Heart left ventricle (tissue), 16 donors: ENCODE measurements at regions of chr12 and their contacts with region 1.

Region 1: GRCh38 chr12:8078398-8078797 is 3.7 kb upstream of the NECAP1 start:
- DNase-seq: peak in 1 of 5 donors; percentile 20
- ATAC-seq: no peak
- H3K4me3 ChIP-seq: no peak overlapping the region
- H3K27ac ChIP-seq: no peak overlapping the region
- H3K4me1 ChIP-seq: peaks cover 0 to 27% (median 11%) of the 10 kb centered on the region in 12 donors
- H3K27me3 ChIP-seq: peaks cover 0 to 5% (median 0%) of the 10 kb centered on the region in 9 donors
- CTCF ChIP-seq: peak in 7 of 12 donors; percentile 12 to 41 (median 16)
- POLR2A ChIP-seq: no peak

Region 2: DNA sequence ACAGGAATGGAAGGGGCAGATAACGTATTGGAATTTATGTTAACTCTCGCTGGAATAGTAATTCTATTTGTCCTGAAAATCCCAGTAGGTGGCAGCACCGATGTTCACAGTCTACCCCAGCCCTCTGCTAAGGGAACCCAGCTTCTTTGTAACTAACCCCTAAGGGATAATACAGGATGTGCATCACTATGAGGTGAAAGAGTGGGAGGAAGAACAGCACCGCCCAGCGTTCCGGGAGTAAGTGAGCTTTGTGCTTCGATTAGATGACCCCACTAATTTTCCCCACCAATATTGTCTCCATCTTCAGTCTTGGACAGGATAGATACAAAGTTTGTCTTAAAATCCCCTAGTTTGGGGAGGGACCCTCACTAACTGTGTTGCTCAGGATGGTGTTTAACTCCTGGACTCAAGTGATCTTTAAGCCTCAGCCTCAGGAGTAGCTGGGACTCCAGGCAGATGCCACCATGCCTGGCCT is 145.1 kb before region 1 on chr12:
- intact Hi-C with region 1: loop called in 1 of 10 experiments (anchors 10 kb)
- DNase-seq: peak; percentile 68 to 86 (median 83)
- ATAC-seq: peak; percentile 87 to 95 (median 91)
- H3K4me3 ChIP-seq: peak overlapping the region; percentile 6 to 74 (median 64)
- H3K27ac ChIP-seq: peak overlapping the region; percentile 64 to 96 (median 88)
- H3K4me1 ChIP-seq: peaks cover 0 to 38% (median 7%) of the 10 kb centered on the region in 12 donors
- H3K27me3 ChIP-seq: peaks cover 0 to 4% (median 0%) of the 10 kb centered on the region in 9 donors
- CTCF ChIP-seq: peak; percentile 47 to 87 (median 72)
- POLR2A ChIP-seq: peak in 1 of 2 donors; percentile 49

Region 3: GRCh38 chr12:8032242-8033152 is 45.9 kb before region 1 on chr12 and contains the start of gene FOXJ2:
- intact Hi-C with region 1: loop called in 8 of 10 experiments (anchors 2 to 10 kb)
- DNase-seq: peak; percentile 84 to 92 (median 89)
- ATAC-seq: peak; percentile 28 to 94 (median 84)
- H3K4me3 ChIP-seq: peak within 1 kb of the TSS; percentile 76 to 98 (median 96)
- H3K27ac ChIP-seq: peak within 1 kb of the TSS; percentile 94 to 99 (median 98)
- H3K4me1 ChIP-seq: peaks cover 8 to 55% (median 42%) of the 10 kb centered on the region in 12 donors
- H3K27me3 ChIP-seq: no peaks in the 10 kb centered on the region
- CTCF ChIP-seq: peak in 2 of 12 donors; percentile 13 to 28
- POLR2A ChIP-seq: peak in 1 of 2 donors; percentile 64
- total RNA-seq, gene FOXJ2: 22.7 to 34.7 (median 24.9) TPM

Region 4: DNA sequence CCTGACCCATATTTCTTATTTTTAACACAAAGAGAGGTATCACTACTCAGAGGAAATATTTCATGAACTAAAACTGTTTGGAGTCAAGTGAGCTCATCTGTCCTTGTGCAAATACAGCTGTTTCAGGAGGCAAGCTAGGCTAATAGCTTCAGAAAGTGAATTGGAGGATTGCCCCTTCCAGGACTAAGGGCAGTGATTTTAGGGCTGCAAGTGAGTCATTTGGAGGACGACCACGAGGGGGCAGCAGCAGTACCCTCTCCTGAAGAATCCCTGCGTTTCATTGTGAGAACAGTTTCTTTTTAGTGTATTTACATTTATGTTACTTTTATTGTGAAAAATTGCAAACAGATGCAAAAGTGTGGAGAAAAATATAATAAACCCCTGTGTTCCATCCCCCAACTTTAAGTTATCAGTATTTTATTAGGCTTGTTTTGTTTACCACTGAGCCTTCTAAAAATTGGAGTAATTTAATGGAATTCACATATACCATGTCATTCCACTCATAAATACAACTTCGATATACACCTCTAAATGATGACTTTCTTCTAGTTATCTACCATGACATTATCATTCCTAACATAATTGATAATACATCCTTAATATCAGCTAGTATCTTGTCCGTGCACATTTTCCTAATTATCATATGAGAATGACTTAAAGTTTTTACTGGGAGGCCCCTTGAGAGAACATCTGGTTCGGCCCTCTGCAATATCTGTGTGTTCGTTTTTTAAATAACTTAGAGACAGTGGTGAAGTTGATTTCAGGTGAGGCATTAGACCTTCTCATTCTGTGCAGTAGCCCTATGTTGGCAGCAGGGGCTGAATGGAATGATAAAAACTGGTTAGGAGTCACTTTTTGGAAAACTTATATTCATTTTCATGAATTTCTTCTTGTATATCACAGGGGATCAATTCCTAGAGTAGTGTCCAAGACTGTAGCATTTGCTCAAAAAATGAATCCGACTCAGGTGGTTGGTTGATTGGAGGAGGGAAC is 32.1 kb before region 1 on chr12:
- intact Hi-C with region 1: loop called in 2 of 10 experiments (anchors 5 kb)
- DNase-seq: peak; percentile 60 to 84 (median 73)
- ATAC-seq: peak; percentile 54 to 73 (median 62)
- H3K4me3 ChIP-seq: no peak overlapping the region
- H3K27ac ChIP-seq: no peak overlapping the region
- H3K4me1 ChIP-seq: peaks cover 0 to 11% (median 0%) of the 10 kb centered on the region in 12 donors
- H3K27me3 ChIP-seq: no peaks in the 10 kb centered on the region
- CTCF ChIP-seq: peak; percentile 73 to 95 (median 86)
- POLR2A ChIP-seq: no peak

Region 5: DNA sequence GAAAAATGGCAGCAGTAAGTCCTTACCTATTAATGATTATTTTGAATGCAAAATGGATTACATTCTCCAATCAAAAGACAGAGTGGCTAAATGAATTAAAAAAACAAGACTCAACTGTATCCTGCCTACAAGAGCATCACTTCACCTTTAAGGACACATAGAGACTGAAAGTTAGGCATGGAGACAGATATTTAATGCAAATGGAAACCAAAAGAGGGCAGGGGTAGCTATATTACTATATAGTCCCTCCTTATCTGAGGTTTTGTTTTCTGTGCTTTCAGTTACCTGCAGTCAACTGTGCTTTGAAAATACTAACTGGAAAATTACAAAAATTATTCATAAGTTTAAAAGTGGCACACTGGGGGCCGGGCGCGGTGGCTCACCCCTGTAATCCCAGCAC is 20.8 kb after region 1 on chr12:
- intact Hi-C with region 1: no loop called
- DNase-seq: no peak
- ATAC-seq: no peak
- H3K4me3 ChIP-seq: no peak overlapping the region
- H3K27ac ChIP-seq: no peak overlapping the region
- H3K4me1 ChIP-seq: peaks cover 0 to 10% (median 0%) of the 10 kb centered on the region in 12 donors
- H3K27me3 ChIP-seq: no peaks in the 10 kb centered on the region
- CTCF ChIP-seq: no peak
- POLR2A ChIP-seq: no peak